ENCODE measurements at regions of chr3 and their contacts with region 1.

Region 1: DNA sequence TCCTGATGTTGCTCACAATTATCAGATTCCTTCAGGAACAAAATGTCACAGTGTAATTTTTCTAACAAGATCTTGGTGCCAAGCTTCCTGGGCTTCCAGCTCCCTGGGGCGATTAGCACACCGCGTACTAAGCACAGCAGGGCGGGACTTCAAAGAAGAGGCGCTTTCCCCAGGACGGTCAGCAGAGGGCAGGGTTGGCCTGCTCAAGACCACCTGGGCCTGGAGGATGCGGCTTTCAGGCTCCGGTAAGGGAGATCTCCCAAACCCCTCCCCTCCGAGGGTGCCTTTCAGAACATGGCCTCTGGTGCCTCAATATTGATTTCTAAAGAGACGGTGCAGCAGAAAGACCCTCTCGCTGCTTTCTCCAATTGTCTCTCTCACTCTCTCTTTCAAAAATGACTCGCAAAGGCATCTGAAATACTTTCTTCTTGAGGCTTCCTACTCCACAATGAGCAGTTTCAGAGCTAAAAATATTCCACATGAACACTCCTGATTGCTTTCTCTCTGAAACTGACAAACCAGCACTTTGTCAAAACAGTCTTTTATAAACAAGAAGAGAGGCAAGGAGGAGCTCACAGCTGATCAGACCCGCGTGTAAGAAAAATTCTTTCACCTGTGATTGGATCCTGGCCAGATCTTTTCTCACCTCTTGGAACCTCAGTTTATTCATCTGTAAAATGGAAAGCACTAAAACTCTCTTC is 154.0 kb downstream of the ADAMTS9 start:
- DNase-seq: peak; percentile 87
- ATAC-seq: peak; percentile 98
- H3K4me3 ChIP-seq: no peak overlapping the region
- H3K27ac ChIP-seq: no peak overlapping the region
- H3K4me1 ChIP-seq: peaks cover 3% of the 10 kb centered on the region; the same call in 1 of the 2 replicates
- H3K27me3 ChIP-seq: no peaks in the 10 kb centered on the region; the same call in 1 of the 2 replicates
- CTCF ChIP-seq: peak; percentile 86
- POLR2A ChIP-seq: no peak
- RAD21 ChIP-seq: peak; percentile 92

Region 2: GRCh38 chr3:64440498-64440897 is 93.3 kb before region 1 on chr3:
- CTCF ChIA-PET with region 1: no interaction called
- POLR2A ChIA-PET with region 1: interaction called, 21 read pairs
- dilution Hi-C with region 1: no loop called
- in situ Hi-C with region 1: no loop called
- intact Hi-C with region 1: no loop called
- DNase-seq: peak; percentile 91
- ATAC-seq: peak; percentile 11; the same call in 1 of the 2 replicates
- H3K4me3 ChIP-seq: no peak overlapping the region
- H3K27ac ChIP-seq: no peak overlapping the region
- H3K4me1 ChIP-seq: peaks cover 17% of the 10 kb centered on the region
- H3K27me3 ChIP-seq: no peaks in the 10 kb centered on the region
- CTCF ChIP-seq: no peak
- POLR2A ChIP-seq: no peak
- RAD21 ChIP-seq: no peak

Region 3: DNA sequence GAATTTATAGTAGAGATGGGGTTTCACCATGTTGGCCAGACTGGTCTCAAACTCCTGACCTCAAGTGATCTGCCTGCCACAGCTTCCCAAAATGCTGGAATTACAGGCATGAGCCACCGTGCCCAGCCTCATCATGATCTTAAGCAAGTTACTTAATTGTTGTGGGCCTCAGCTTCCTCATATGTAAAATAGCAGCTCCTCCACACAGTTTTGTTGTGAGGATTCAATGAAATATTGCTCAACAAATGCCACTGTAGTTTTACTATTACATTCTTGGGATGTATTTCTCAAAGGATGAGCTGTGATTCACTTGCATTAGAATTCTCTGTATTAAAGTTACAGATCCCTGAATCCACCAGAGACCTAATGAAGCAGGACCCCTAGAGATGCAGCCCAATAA is 14.8 kb before region 1 on chr3:
- CTCF ChIA-PET with region 1: interaction called, 10 read pairs
- POLR2A ChIA-PET with region 1: interaction called, 15 read pairs
- dilution Hi-C with region 1: no loop called
- in situ Hi-C with region 1: no loop called
- intact Hi-C with region 1: no loop called
- DNase-seq: peak; percentile 41
- ATAC-seq: peak; percentile 86
- H3K4me3 ChIP-seq: no peak overlapping the region
- H3K27ac ChIP-seq: peak overlapping the region; percentile 64
- H3K4me1 ChIP-seq: peaks cover 2% of the 10 kb centered on the region; the same call in 1 of the 2 replicates
- H3K27me3 ChIP-seq: no peaks in the 10 kb centered on the region
- CTCF ChIP-seq: no peak
- POLR2A ChIP-seq: no peak
- RAD21 ChIP-seq: no peak

Region 4: GRCh38 chr3:65170390-65171042 is 636.7 kb after region 1 on chr3:
- CTCF ChIA-PET with region 1: no interaction called
- POLR2A ChIA-PET with region 1: no interaction called
- dilution Hi-C with region 1: no loop called
- in situ Hi-C with region 1: no loop called
- intact Hi-C with region 1: loop called (anchors 2 kb)
- DNase-seq: peak; percentile 85
- ATAC-seq: peak; percentile 64
- H3K4me3 ChIP-seq: no peak overlapping the region
- H3K27ac ChIP-seq: no peak overlapping the region
- H3K4me1 ChIP-seq: no peaks in the 10 kb centered on the region
- H3K27me3 ChIP-seq: no peaks in the 10 kb centered on the region; the same call in 1 of the 2 replicates
- CTCF ChIP-seq: peak; percentile 26; the same call in 1 of the 2 replicates
- POLR2A ChIP-seq: no peak
- RAD21 ChIP-seq: 0 out of 2 replicates have a peak, but pooled peaks have one; percentile 12

Region 5: GRCh38 chr3:65342084-65342683 is 808.4 kb after region 1 on chr3:
- CTCF ChIA-PET with region 1: no interaction called
- POLR2A ChIA-PET with region 1: no interaction called
- dilution Hi-C with region 1: no loop called
- in situ Hi-C with region 1: no loop called
- intact Hi-C with region 1: loop called (anchors 10 kb)
- DNase-seq: peak; percentile 55
- ATAC-seq: peak; percentile 75
- H3K4me3 ChIP-seq: no peak overlapping the region
- H3K27ac ChIP-seq: no peak overlapping the region
- H3K4me1 ChIP-seq: no peaks in the 10 kb centered on the region
- H3K27me3 ChIP-seq: peaks cover 14% of the 10 kb centered on the region
- CTCF ChIP-seq: peak; percentile 60
- POLR2A ChIP-seq: no peak
- RAD21 ChIP-seq: peak; percentile 67

Region 6: DNA sequence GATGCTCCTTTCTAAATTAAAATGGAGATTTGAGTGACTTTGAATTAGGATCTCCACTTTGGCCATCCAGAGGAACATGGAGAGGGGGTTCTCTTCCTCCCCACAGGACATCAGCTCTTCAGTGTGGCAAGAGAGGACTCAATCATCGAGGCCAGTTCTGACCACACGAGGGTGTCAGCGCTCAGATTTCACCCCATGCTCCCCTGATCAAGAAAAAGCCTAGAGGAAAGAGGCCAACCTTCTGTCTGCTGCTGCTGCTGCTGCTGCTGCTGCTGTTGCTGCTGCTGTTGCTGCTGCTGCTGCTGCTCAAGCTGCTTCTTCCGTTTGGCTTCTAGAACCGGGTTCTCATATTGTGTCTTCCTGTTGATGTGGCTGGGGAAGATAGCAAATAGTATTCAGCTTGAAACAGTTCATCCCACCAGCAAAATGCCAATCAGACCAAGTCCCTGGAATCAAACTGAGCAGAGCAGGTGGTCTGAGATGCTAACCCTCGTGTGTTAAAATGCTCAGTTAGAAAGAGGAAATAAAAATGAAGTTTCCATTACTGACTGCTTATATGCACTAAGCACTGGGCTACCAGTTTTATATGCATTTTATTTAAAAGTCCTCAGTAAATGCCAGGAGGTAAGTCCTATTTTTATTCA is 906.0 kb after region 1 on chr3:
- CTCF ChIA-PET with region 1: interaction called, 9 read pairs
- POLR2A ChIA-PET with region 1: no interaction called
- dilution Hi-C with region 1: no loop called
- in situ Hi-C with region 1: no loop called
- intact Hi-C with region 1: loop called (anchors 5 kb)
- DNase-seq: peak; percentile 74
- ATAC-seq: peak; percentile 95
- H3K4me3 ChIP-seq: no peak overlapping the region
- H3K27ac ChIP-seq: no peak overlapping the region
- H3K4me1 ChIP-seq: peaks cover 6% of the 10 kb centered on the region
- H3K27me3 ChIP-seq: no peaks in the 10 kb centered on the region
- CTCF ChIP-seq: peak; percentile 72
- POLR2A ChIP-seq: no peak
- RAD21 ChIP-seq: peak; percentile 86

Region 7: DNA sequence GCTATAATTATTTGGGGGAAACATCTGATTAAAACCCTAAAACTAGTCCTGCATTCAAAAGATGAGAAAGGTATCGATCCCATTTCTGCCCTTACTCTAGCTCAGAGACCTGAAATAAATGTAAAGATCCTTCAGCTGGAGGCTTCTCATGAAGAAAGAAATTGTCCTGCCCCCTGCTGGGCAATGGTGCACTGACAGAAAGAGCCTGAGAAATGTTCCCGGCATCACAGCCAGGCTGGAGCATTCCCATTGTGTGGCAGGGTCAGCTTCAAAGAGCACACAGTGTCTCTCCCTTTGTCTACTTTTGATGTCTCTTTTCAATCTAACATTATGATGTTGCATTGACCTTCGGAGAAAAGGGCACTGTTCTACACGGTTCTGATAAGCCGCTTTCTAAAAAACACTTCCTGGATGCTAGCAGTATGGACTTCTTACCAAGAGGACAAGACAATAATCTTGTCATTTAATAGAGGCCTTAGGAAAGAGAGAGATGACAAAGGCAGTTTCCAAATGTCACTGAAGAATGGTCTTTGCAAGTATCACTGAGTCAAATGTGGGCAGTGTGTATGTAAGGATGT is 1217.4 kb after region 1 on chr3:
- CTCF ChIA-PET with region 1: interaction called, 3 read pairs
- POLR2A ChIA-PET with region 1: no interaction called
- dilution Hi-C with region 1: no loop called
- in situ Hi-C with region 1: loop called (anchors 25 kb)
- intact Hi-C with region 1: loop called (anchors 5 kb)
- DNase-seq: peak; percentile 34
- ATAC-seq: peak; percentile 89
- H3K4me3 ChIP-seq: no peak overlapping the region
- H3K27ac ChIP-seq: no peak overlapping the region
- H3K4me1 ChIP-seq: no peaks in the 10 kb centered on the region; the same call in 1 of the 2 replicates
- H3K27me3 ChIP-seq: no peaks in the 10 kb centered on the region
- CTCF ChIP-seq: peak; percentile 59
- POLR2A ChIP-seq: no peak
- RAD21 ChIP-seq: peak; percentile 54